GM12878 (cell line): ENCODE measurements at regions of chr2 and their contacts with region 1.

Region 1: GRCh38 chr2:69816923-69817542 is 12.4 kb upstream of the GMCL1 start:
- DNase-seq: peak; percentile 66
- ATAC-seq: peak; percentile 89
- H3K4me3 ChIP-seq: no peak overlapping the region
- H3K27ac ChIP-seq: no peak overlapping the region; the same call in 1 of the 2 replicates
- H3K4me1 ChIP-seq: no peaks in the 10 kb centered on the region
- H3K27me3 ChIP-seq: no peaks in the 10 kb centered on the region
- CTCF ChIP-seq: peak; percentile 71 to 82 (median 80)
- EP300 ChIP-seq: no peak
- POLR2A ChIP-seq: no peak
- RAD21 ChIP-seq: peak; percentile 92

Region 2: DNA sequence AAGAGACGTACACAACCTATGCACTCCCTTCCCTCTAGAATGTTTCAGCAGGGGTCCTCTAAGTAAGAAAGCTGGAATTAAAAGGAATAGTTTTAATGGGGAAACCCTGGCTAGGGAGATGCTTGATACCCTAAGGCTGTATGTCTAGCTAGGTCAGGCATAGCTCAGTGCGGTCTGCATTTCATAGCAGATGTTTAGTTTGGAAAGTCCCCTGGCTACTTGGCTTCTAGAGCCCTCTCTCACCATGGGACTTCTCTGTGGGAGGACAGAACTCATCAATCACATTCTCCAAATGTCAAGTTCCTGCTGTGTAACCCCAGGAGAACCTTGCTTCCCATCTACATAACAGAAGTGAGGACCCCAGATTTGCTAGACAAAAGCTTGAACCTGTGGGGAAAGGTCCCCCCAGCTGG is 99.2 kb before region 1 on chr2:
- CTCF ChIA-PET with region 1: interaction called, 408 read pairs
- POLR2A ChIA-PET with region 1: interaction called, 3 read pairs
- RAD21 ChIA-PET with region 1: interaction called, 245 read pairs
- SMC1A ChIA-PET with region 1: interaction called, 290 read pairs
- in situ Hi-C with region 1: loop called (anchors 5 kb)
- intact Hi-C with region 1: no loop called
- DNase-seq: no peak
- ATAC-seq: peak; percentile 82
- H3K4me3 ChIP-seq: no peak overlapping the region
- H3K27ac ChIP-seq: no peak overlapping the region
- H3K4me1 ChIP-seq: peaks cover 12% of the 10 kb centered on the region; the same call in 1 of the 2 replicates
- H3K27me3 ChIP-seq: no peaks in the 10 kb centered on the region
- CTCF ChIP-seq: no peak
- EP300 ChIP-seq: peak in 1 of 2 experiments; percentile 9; a peak in 1 of 4 replicates
- POLR2A ChIP-seq: no peak
- RAD21 ChIP-seq: no peak

Region 3: DNA sequence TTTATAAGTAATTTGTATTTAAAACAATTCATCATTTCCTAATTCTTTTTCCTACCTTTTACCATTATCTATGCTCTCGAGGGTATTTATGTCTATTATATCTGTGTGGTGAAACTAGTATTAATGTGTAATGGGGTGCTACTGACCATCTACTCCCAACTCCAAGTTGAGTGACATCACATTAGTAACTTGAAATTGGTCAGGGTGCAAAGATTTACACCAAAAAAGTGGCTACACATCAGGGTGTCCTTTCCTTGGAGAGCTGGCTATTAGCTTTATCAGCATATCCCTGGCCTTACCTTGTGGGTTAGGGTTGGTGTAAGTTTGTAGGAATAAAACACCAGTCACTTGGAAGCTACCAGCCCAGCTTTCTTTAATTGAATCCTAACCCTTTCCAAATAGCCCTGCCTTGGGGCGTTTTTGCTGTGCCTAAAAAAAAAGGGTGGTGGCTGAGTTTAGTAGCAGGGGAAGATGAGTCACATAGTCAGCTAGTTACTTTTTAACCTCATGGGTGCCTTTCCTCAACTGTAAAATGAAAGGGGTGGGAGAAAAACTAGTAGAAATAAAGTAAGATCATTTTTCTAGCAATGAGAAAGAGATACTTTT is 61.1 kb before region 1 on chr2:
- CTCF ChIA-PET with region 1: interaction called, 8 read pairs
- POLR2A ChIA-PET with region 1: interaction called, 4 read pairs
- RAD21 ChIA-PET with region 1: interaction called, 11 read pairs
- SMC1A ChIA-PET with region 1: interaction called, 30 read pairs
- in situ Hi-C with region 1: no loop called
- intact Hi-C with region 1: no loop called
- DNase-seq: no peak
- ATAC-seq: peak; percentile 90
- H3K4me3 ChIP-seq: no peak overlapping the region
- H3K27ac ChIP-seq: no peak overlapping the region
- H3K4me1 ChIP-seq: peaks cover 7% of the 10 kb centered on the region
- H3K27me3 ChIP-seq: no peaks in the 10 kb centered on the region
- CTCF ChIP-seq: no peak
- EP300 ChIP-seq: no peak
- POLR2A ChIP-seq: no peak
- RAD21 ChIP-seq: no peak

Region 4: GRCh38 chr2:69781321-69782248 is 35.4 kb before region 1 on chr2:
- CTCF ChIA-PET with region 1: interaction called, 15 read pairs
- POLR2A ChIA-PET with region 1: interaction called, 7 read pairs
- RAD21 ChIA-PET with region 1: interaction called, 24 read pairs
- SMC1A ChIA-PET with region 1: interaction called, 61 read pairs
- in situ Hi-C with region 1: no loop called
- intact Hi-C with region 1: no loop called
- DNase-seq: no peak
- ATAC-seq: peak; percentile 88
- H3K4me3 ChIP-seq: 0 out of 2 replicates have a peak overlapping the region, but pooled peaks have one; percentile 21
- H3K27ac ChIP-seq: peak overlapping the region; percentile 42
- H3K4me1 ChIP-seq: peaks cover 14% of the 10 kb centered on the region
- H3K27me3 ChIP-seq: no peaks in the 10 kb centered on the region
- CTCF ChIP-seq: no peak
- EP300 ChIP-seq: no peak
- POLR2A ChIP-seq: no peak
- RAD21 ChIP-seq: no peak

Region 5: GRCh38 chr2:69804416-69804815 is 12.6 kb before region 1 on chr2:
- CTCF ChIA-PET with region 1: interaction called, 103 read pairs
- POLR2A ChIA-PET with region 1: interaction called, 19 read pairs
- RAD21 ChIA-PET with region 1: interaction called, 35 read pairs
- SMC1A ChIA-PET with region 1: interaction called, 117 read pairs
- in situ Hi-C with region 1: no loop called
- intact Hi-C with region 1: loop called (anchors 2 kb)
- DNase-seq: no peak
- ATAC-seq: no peak
- H3K4me3 ChIP-seq: no peak overlapping the region
- H3K27ac ChIP-seq: peak overlapping the region; percentile 0; the same call in 1 of the 2 replicates
- H3K4me1 ChIP-seq: peaks cover 47% of the 10 kb centered on the region
- H3K27me3 ChIP-seq: no peaks in the 10 kb centered on the region
- CTCF ChIP-seq: no peak
- EP300 ChIP-seq: no peak
- POLR2A ChIP-seq: no peak
- RAD21 ChIP-seq: no peak

Region 6: DNA sequence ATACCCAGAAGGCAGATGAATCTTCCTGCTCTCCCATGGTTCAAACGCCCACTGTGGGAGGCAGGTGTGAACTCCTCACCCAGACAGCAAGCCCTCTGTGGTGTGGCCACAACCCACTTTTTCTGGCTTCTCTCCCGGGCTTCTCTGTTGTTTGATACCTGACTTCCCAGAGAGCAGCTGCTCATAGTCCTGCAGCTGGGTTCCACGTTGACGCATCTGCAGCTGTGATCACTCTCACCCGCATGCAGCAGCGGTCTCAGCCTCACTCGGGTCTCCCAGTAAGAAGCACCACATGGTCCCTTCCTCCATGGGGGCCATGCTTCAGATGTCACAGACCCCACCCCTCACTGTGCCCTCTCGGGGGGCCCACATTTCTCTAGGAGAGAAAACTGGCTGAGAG is 140.9 kb after region 1 on chr2:
- CTCF ChIA-PET with region 1: no interaction called
- POLR2A ChIA-PET with region 1: no interaction called
- RAD21 ChIA-PET with region 1: no interaction called
- SMC1A ChIA-PET with region 1: no interaction called
- in situ Hi-C with region 1: no loop called
- intact Hi-C with region 1: no loop called
- DNase-seq: no peak
- ATAC-seq: no peak
- H3K4me3 ChIP-seq: no peak overlapping the region
- H3K27ac ChIP-seq: no peak overlapping the region
- H3K4me1 ChIP-seq: no peaks in the 10 kb centered on the region
- H3K27me3 ChIP-seq: no peaks in the 10 kb centered on the region
- CTCF ChIP-seq: no peak
- EP300 ChIP-seq: no peak
- POLR2A ChIP-seq: no peak
- RAD21 ChIP-seq: no peak

Region 7: GRCh38 chr2:69975500-69976462 is 158.7 kb after region 1 on chr2:
- CTCF ChIA-PET with region 1: no interaction called
- POLR2A ChIA-PET with region 1: no interaction called
- RAD21 ChIA-PET with region 1: no interaction called
- SMC1A ChIA-PET with region 1: no interaction called
- in situ Hi-C with region 1: no loop called
- intact Hi-C with region 1: no loop called
- DNase-seq: no peak
- ATAC-seq: no peak
- H3K4me3 ChIP-seq: no peak overlapping the region
- H3K27ac ChIP-seq: no peak overlapping the region
- H3K4me1 ChIP-seq: no peaks in the 10 kb centered on the region
- H3K27me3 ChIP-seq: no peaks in the 10 kb centered on the region
- CTCF ChIP-seq: no peak
- EP300 ChIP-seq: no peak
- POLR2A ChIP-seq: no peak
- RAD21 ChIP-seq: no peak